ENCODE measurements at regions of chr17 and their contacts with region 1.

Region 1: DNA sequence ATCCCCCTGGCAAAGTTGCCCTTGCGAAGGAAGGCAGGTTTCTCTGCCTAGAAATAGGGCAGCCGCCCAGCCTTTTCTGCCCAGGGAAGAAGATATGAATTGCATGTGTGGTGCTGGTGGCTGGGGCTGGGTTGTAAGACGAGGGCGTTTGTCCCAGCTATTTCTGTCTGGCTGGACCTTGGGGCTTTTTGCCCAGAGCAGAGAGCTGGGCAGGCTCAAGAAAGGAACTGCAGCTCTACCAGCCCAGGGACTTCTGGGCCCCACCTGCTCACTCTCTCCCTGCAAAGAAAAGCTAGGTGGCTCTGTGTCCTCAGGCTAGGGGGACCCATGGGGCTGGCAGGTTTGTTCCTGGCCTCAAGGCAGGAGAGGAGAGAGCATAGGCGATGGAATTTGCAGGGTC is 586 bp downstream of the CACNG1 start:
- DNase-seq: no peak
- H3K4me3 ChIP-seq: no peak overlapping the region
- H3K27ac ChIP-seq: no peak overlapping the region
- H3K4me1 ChIP-seq: no peaks in the 10 kb centered on the region
- H3K27me3 ChIP-seq: no peaks in the 10 kb centered on the region
- CTCF ChIP-seq: no peak

Region 2: GRCh38 chr17:67343251-67343650 is 298.3 kb after region 1 on chr17:
- CTCF ChIA-PET with region 1: no interaction called
- dilution Hi-C with region 1: no loop called
- in situ Hi-C with region 1: no loop called
- intact Hi-C with region 1: no loop called
- DNase-seq: no peak
- H3K4me3 ChIP-seq: no peak overlapping the region
- H3K27ac ChIP-seq: no peak overlapping the region
- H3K4me1 ChIP-seq: peaks cover 6% of the 10 kb centered on the region
- H3K27me3 ChIP-seq: no peaks in the 10 kb centered on the region
- CTCF ChIP-seq: no peak

Region 3: GRCh38 chr17:68391561-68392268 is 1346.8 kb after region 1 on chr17:
- CTCF ChIA-PET with region 1: interaction called, 20 read pairs
- dilution Hi-C with region 1: no loop called
- in situ Hi-C with region 1: no loop called
- intact Hi-C with region 1: no loop called
- DNase-seq: no peak
- H3K4me3 ChIP-seq: no peak overlapping the region
- H3K27ac ChIP-seq: no peak overlapping the region
- H3K4me1 ChIP-seq: no peaks in the 10 kb centered on the region
- H3K27me3 ChIP-seq: peaks cover 2% of the 10 kb centered on the region
- CTCF ChIP-seq: no peak

Measured in mammary epithelial cell (primary cell).